ENCODE measurements at regions of chr12 and their contacts with region 1.

Region 1: GRCh38 chr12:3998968-3999826 is 126.0 kb upstream of the PARP11 start:
- DNase-seq: no peak
- ATAC-seq: no peak
- H3K4me3 ChIP-seq: no peak overlapping the region
- H3K27ac ChIP-seq: no peak overlapping the region
- H3K4me1 ChIP-seq: no peaks in the 10 kb centered on the region
- H3K27me3 ChIP-seq: peaks cover 0 to 13% (median 0%) of the 10 kb centered on the region in 9 donors
- CTCF ChIP-seq: no peak
- POLR2A ChIP-seq: no peak

Region 2: GRCh38 chr12:3803865-3804472 is 195.2 kb before region 1 on chr12:
- intact Hi-C with region 1: no loop called
- DNase-seq: peak; percentile 67 to 80 (median 72)
- ATAC-seq: peak in 3 of 4 donors; percentile 82 to 87 (median 84)
- H3K4me3 ChIP-seq: no peak overlapping the region
- H3K27ac ChIP-seq: no peak overlapping the region
- H3K4me1 ChIP-seq: no peaks in the 10 kb centered on the region
- H3K27me3 ChIP-seq: no peaks in the 10 kb centered on the region
- CTCF ChIP-seq: peak; percentile 71 to 90 (median 84)
- POLR2A ChIP-seq: no peak

Region 3: GRCh38 chr12:4107436-4107878 is 108.3 kb after region 1 on chr12:
- intact Hi-C with region 1: loop called in 1 of 10 experiments (anchors 5 kb)
- DNase-seq: peak in 2 of 5 donors; percentile 27 to 51
- ATAC-seq: peak in 3 of 4 donors; percentile 55 to 71 (median 70)
- H3K4me3 ChIP-seq: no peak overlapping the region
- H3K27ac ChIP-seq: no peak overlapping the region
- H3K4me1 ChIP-seq: peaks cover 0 to 11% (median 0%) of the 10 kb centered on the region in 12 donors
- H3K27me3 ChIP-seq: no peaks in the 10 kb centered on the region
- CTCF ChIP-seq: peak; percentile 20 to 74 (median 50)
- POLR2A ChIP-seq: no peak

Region 4: DNA sequence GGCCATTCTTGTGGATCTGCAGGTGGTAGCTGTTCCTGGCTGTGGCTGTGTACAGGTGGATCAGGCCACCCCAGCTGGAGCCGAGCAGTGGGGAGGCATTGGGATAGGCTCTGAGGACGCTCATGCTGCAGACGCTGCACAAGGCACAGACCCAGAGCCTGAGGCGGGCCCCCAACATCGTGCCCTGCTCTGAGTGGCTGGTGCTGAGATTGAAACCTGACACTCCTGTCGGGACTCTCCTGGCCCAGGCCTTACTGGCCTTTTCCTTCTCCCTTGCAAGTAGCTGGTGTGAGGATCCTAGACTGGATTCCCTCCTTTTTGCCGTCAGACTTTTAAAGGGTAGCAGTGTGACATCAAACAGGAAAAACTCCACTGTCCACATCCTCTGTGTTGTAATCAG is 380.2 kb after region 1 on chr12 and contains the start of gene FGF23:
- intact Hi-C with region 1: no loop called
- DNase-seq: peak in 1 of 5 donors; percentile 66
- ATAC-seq: peak in 3 of 4 donors; percentile 62 to 81 (median 70)
- H3K4me3 ChIP-seq: peak within 1 kb of the TSS in 1 of 12 donors; percentile 22
- H3K27ac ChIP-seq: no peak within 1 kb of the TSS
- H3K4me1 ChIP-seq: no peaks in the 10 kb centered on the region
- H3K27me3 ChIP-seq: peaks cover 0 to 11% (median 0%) of the 10 kb centered on the region in 9 donors
- CTCF ChIP-seq: no peak
- POLR2A ChIP-seq: no peak
- total RNA-seq, gene FGF23: 0.10 to 0.15 TPM in 2 of 9 donors, not detected in the others